ENCODE measurements at regions of chr5 and their contacts with region 1.

Region 1: GRCh38 chr5:98773464-98774191 is at the start of gene RGMB:
- DNase-seq: peak; percentile 94
- H3K4me3 Mint-ChIP-seq: peak within 1 kb of the TSS; percentile 90
- H3K27ac Mint-ChIP-seq: peak within 1 kb of the TSS; percentile 55
- H3K4me1 Mint-ChIP-seq: peaks cover 32% of the 10 kb centered on the region
- H3K27me3 Mint-ChIP-seq: peaks cover 68% of the 10 kb centered on the region
- total RNA-seq, gene RGMB: 0.35 and 0.90 TPM in 2 replicates

Region 2: DNA sequence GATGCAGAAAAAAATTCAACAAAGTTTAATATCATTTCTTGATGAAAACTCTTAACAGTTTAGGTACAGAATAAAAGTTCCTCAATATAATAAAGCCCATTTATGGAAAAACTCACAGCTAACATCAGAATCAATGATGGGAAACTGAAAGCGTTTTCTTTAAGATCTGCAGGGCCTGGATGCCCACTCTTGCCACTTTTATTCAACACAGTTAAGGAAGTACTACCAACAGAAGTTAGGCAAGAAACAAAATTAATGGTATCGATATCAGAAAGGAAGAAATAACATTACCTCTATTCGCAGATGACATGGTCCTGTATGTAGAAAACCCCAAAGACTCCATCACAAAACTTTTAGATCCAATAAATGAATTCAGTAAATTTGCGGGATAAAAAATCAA is 542.5 kb before region 1 on chr5:
- intact Hi-C with region 1: loop called (anchors 10 kb)
- DNase-seq: no peak
- H3K4me3 Mint-ChIP-seq: no peak overlapping the region
- H3K27ac Mint-ChIP-seq: no peak overlapping the region
- H3K4me1 Mint-ChIP-seq: no peaks in the 10 kb centered on the region
- H3K27me3 Mint-ChIP-seq: no peaks in the 10 kb centered on the region

Region 3: DNA sequence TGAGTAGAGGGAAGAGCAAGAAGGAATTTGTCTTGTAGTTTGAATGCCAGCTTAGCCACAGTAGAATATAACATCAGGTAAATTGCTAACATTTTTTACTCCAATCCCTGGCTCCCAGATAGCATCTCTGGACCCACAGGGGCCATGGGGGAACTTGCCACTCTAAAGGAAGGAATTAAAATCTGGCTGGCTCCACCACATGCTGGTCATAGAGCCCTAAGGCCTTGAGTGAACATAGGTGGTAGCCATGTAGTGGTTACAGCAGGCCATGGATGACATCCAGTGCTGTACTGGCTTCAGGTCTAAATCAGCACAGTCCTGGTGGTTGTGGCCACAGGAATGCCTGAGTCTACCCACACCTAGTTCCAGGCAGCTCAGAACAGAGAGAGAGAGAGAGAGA is 110.1 kb before region 1 on chr5:
- intact Hi-C with region 1: no loop called
- DNase-seq: no peak
- H3K4me3 Mint-ChIP-seq: no peak overlapping the region
- H3K27ac Mint-ChIP-seq: no peak overlapping the region
- H3K4me1 Mint-ChIP-seq: no peaks in the 10 kb centered on the region
- H3K27me3 Mint-ChIP-seq: no peaks in the 10 kb centered on the region

Region 4: DNA sequence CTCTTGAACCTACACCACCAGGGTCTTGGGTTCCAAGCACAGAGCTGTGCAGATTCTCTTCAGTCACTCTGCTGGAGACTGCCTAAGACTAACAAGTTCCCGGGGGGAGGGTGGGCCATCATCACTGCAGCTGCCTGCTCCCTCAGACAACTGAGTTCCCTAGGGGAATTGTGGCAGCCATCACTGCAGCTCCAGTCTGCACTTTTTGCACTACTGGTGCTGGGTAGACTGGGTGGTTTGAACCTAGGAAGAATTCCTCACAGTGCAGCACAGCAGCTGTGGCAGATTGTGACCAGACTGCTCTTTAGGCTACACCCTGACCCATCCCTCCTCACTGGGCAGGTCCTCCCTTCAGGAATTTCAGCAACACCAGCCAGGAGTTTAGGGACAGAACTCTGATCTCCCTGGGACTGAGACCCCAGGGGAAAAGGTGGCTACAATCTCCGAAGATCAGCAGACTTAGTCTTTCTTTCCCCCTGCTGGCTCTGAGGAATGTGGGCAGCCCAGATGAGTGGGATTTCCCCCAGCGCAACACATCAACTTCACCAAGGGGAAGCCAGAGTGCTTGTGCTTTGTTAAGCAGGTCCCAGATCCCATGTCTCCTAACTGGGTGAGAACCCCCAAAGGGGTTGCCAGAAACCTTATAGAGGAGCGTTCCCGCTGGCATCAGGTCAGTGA is 31.1 kb before region 1 on chr5:
- intact Hi-C with region 1: no loop called
- DNase-seq: no peak
- H3K4me3 Mint-ChIP-seq: no peak overlapping the region
- H3K27ac Mint-ChIP-seq: no peak overlapping the region
- H3K4me1 Mint-ChIP-seq: no peaks in the 10 kb centered on the region
- H3K27me3 Mint-ChIP-seq: peaks cover 16% of the 10 kb centered on the region

Region 5: GRCh38 chr5:98786191-98786853 is 12.7 kb after region 1 on chr5:
- intact Hi-C with region 1: no loop called
- DNase-seq: no peak
- H3K4me3 Mint-ChIP-seq: no peak overlapping the region
- H3K27ac Mint-ChIP-seq: no peak overlapping the region
- H3K4me1 Mint-ChIP-seq: no peaks in the 10 kb centered on the region
- H3K27me3 Mint-ChIP-seq: peaks cover 6% of the 10 kb centered on the region

Region 6: DNA sequence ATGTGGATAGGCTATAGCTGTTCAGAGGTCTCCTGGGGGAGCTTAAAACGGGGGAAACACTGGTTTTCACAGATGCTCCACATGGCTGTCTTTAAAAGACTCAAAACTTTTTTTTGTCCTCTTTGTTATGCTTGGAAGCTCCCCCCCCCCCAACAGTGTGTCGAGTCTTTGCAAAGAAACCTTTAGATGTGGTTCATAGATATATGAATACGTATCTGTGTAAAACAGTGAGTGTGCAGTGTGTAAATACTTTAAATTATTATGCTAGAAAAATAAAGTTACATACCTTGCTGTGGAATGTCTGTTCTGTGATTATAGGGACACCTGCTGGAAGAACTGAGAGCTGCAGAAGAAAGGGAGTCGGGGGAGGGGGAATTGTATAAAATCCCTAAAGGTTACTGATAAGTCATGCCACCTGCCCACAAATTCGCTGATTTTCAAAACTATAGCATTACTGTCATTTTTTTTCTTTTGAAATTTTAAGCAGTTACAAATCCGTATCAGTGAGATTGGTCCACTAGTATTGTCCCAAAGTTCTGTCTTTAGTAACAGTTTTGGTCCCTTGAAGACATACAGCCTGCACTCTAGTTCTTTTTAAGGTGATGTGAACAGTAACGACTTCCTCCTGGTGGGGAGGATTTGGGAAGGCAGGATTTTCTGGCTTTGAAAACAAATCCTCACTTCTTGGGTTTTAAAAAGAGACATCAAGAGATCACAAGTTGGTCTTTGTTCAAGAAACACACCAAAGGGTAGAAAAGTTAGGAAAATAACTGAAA is 22.8 kb after region 1 on chr5:
- intact Hi-C with region 1: loop called (anchors 2 kb)
- DNase-seq: peak; percentile 82
- H3K4me3 Mint-ChIP-seq: no peak overlapping the region
- H3K27ac Mint-ChIP-seq: no peak overlapping the region
- H3K4me1 Mint-ChIP-seq: peaks cover 2% of the 10 kb centered on the region
- H3K27me3 Mint-ChIP-seq: peaks cover 4% of the 10 kb centered on the region

Region 7: GRCh38 chr5:98933445-98934072 is 159.9 kb after region 1 on chr5:
- intact Hi-C with region 1: no loop called
- DNase-seq: peak; percentile 80
- H3K4me3 Mint-ChIP-seq: peak overlapping the region; percentile 55
- H3K27ac Mint-ChIP-seq: peak overlapping the region; percentile 91
- H3K4me1 Mint-ChIP-seq: peaks cover 28% of the 10 kb centered on the region
- H3K27me3 Mint-ChIP-seq: peaks cover 5% of the 10 kb centered on the region

Region 8: GRCh38 chr5:99032234-99033013 is 258.8 kb after region 1 on chr5:
- intact Hi-C with region 1: loop called (anchors 5 kb)
- DNase-seq: peak; percentile 73
- H3K4me3 Mint-ChIP-seq: peak overlapping the region; percentile 77
- H3K27ac Mint-ChIP-seq: peak overlapping the region; percentile 81
- H3K4me1 Mint-ChIP-seq: peaks cover 61% of the 10 kb centered on the region
- H3K27me3 Mint-ChIP-seq: no peaks in the 10 kb centered on the region